ENCODE measurements at regions of chr2 and their contacts with region 1.

Region 1: GRCh38 chr2:38665854-38666555 is at the start of gene GALM:
- DNase-seq: peak in 6 of 10 donors; percentile 26 to 55 (median 34)
- H3K4me3 ChIP-seq: peak within 1 kb of the TSS; percentile 40 to 81 (median 65)
- H3K27ac ChIP-seq: peak within 1 kb of the TSS in 56 of 59 donors; percentile 2 to 82 (median 59)
- H3K27me3 ChIP-seq: no peaks in the 10 kb centered on the region
- CTCF ChIP-seq: peak in 3 of 56 donors; percentile 11 to 29 (median 16)
- total RNA-seq, gene GALM: 2.0 to 13.3 (median 4.5) TPM

Region 2: DNA sequence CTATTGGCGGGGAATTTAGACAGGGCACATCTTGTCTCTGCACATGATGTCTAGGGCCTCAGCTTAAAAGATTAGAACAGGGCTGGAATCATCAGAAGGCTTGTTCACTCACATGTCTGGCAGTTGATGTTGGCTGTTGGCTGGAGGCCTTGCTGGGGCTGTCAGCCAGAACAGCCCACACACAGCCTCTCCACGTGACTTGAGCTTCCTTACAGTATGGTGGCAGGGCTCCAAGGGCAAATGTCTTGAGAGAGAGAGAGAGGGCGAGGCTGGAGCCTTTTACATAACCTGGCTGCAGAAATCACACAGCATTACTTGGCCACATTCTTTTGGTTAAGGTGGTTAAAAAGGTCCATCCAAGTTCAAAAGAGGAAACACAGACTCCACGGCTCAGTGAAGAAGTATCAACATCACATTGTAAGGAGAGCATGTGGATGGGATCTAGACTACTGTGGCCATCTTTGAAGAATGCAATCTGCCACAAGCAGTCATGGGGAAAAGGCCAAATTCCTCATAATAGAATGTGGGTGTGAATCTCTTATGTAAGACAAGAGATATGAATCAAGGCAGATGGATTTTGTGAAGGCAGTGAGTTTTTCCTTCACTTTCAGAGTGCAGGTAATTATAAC is 54.7 kb after region 1 on chr2:
- intact Hi-C with region 1: loop called in 1 of 2 experiments (anchors 5 kb)
- DNase-seq: peak in 8 of 10 donors; percentile 24 to 85 (median 50)
- H3K4me3 ChIP-seq: no peak overlapping the region
- H3K27ac ChIP-seq: peak overlapping the region in 42 of 59 donors; percentile 16 to 78 (median 58)
- H3K27me3 ChIP-seq: no peaks in the 10 kb centered on the region
- CTCF ChIP-seq: no peak